ENCODE measurements at regions of chr15 and their contacts with region 1.

Region 1: DNA sequence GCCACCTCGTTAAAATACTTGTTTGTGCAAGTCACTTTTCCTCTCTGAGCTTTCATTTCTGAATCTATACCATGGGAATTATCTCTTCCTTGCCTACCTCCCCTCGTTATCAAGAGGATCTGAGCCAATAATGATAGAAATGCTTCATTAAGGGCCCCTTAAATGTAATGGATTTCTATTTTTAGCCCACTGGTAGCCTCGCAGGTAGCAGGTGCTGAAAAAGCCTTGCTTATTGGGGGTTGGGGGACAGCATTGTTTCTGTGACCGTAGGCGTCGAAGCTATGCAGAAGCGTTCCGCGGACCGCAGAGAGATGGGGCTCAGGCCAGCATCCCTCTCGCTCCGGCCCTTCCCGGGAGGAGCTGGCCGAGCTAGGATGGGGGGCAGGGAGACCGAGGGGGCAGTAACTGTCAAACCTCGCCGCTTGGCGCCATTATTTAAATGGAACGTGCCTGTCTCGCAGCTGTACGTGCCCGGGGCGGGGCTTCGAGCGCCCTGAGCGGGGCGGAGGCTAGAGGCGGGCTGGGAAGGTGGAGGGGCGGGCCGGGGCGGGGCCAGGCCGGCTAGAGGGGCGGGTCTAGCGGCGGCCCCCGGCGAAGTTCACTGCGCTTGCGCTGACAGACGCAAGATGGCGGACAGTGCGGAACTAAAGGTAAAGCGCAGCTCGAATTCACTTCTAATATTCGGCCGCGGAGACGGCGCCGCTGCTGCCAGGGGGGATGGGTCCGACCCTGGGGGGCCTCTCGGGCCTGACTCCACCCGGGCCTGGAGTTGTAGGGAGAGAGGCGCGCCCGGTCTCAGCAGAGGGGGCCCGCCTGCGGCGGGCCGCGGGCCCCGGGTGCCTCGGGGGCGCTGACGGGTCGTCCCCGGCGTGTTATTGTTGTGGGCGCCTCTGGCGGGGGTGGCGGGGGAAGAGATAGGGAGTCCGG is at the start of gene PIAS1:
- DNase-seq: peak; percentile 93 to 97
- ATAC-seq: peak; percentile 97 to 99 (median 98)
- H3K4me3 ChIP-seq: peak within 1 kb of the TSS; percentile 86 to 96 (median 92)
- H3K27ac ChIP-seq: peak within 1 kb of the TSS; percentile 60 to 96 (median 92)
- H3K4me1 ChIP-seq: peaks cover 0 to 42% (median 32%) of the 10 kb centered on the region in 9 donors
- H3K27me3 ChIP-seq: no peaks in the 10 kb centered on the region
- CTCF ChIP-seq: peak in 2 of 9 donors; percentile 14 to 21
- total RNA-seq, gene PIAS1: 23.5 to 37.9 (median 31.6) TPM

Region 2: DNA sequence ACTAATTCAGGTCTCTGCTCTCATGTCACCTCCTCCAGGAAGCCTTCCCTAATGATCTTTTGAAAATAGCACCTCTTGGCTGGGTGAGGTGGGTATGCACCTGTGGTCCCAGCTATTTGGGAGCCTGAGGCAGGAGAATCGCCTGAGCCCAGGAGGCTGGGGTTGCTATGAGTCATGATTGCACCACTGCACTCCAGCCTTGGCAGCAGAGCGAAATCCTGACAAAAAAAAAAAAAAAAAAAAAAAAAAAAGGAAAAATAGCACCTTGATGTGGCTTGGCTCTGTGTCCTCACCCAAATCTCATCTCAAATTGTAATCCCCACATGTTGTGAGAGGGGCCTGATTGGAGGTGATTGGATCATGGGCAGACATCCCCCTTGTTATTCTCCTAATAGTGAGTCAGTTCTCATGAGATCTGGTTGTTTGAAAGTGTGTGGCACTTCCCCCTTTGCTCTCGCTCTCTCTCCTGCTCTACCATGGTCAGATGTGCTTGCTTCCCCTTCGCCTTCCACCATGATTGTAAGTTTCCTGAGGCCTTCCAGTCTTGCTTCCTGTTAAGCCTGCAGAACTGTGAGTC is 202.9 kb before region 1 on chr15:
- intact Hi-C with region 1: no loop called
- DNase-seq: no peak
- ATAC-seq: peak in 1 of 8 donors; percentile 35
- H3K4me3 ChIP-seq: no peak overlapping the region
- H3K27ac ChIP-seq: no peak overlapping the region
- H3K4me1 ChIP-seq: peaks cover 0 to 7% (median 0%) of the 10 kb centered on the region in 9 donors
- H3K27me3 ChIP-seq: no peaks in the 10 kb centered on the region
- CTCF ChIP-seq: no peak

Region 3: DNA sequence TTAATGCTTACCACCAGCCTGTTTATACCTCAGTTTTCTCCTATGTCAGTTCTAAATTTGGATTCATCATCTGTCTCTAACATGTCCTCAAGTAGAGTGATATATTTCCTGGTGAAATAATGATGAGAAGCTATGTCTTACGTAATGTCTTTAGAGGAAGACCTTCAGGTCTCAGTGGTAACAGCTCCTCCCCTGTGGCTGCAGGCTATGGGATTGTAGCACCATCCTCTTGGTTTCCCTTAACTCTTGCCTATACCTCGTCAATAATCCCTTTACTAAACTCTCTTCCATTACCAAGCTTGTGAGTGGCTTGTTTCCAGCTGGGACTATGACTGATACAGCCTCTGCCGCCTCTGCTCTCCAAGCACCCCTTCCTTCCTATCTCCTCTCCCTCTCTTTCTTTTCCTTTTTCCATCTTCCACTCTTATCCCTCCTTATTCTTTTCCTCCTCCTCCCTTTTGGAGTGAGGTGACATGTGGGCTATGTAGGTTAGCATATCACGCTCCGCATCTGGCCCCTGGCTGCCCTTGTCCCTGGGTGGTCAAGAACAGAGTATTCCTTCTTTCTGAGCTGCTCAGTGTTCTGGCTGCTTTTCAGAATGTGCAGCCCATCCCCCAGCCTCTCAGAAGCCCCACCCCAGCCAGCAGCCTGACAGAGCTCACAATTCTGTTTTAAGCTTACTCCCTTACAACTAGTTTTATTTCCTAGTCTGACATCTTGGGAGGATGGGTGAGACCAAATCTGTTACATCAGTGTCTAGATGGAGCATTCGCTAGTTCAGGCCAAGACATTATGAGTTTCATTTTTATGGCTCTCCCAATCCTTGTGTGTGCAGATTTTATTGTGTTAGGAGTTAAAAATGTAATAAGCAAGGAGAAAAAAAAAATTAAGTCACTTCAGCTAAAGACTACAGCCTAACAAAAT is 139.2 kb before region 1 on chr15:
- intact Hi-C with region 1: loop called in 1 of 10 experiments (anchors 5 kb)
- DNase-seq: peak; percentile 47 to 60
- ATAC-seq: peak; percentile 25 to 86 (median 75)
- H3K4me3 ChIP-seq: no peak overlapping the region
- H3K27ac ChIP-seq: peak overlapping the region; percentile 15 to 91 (median 78)
- H3K4me1 ChIP-seq: peaks cover 4 to 45% (median 32%) of the 10 kb centered on the region in 9 donors
- H3K27me3 ChIP-seq: no peaks in the 10 kb centered on the region
- CTCF ChIP-seq: no peak

Region 4: DNA sequence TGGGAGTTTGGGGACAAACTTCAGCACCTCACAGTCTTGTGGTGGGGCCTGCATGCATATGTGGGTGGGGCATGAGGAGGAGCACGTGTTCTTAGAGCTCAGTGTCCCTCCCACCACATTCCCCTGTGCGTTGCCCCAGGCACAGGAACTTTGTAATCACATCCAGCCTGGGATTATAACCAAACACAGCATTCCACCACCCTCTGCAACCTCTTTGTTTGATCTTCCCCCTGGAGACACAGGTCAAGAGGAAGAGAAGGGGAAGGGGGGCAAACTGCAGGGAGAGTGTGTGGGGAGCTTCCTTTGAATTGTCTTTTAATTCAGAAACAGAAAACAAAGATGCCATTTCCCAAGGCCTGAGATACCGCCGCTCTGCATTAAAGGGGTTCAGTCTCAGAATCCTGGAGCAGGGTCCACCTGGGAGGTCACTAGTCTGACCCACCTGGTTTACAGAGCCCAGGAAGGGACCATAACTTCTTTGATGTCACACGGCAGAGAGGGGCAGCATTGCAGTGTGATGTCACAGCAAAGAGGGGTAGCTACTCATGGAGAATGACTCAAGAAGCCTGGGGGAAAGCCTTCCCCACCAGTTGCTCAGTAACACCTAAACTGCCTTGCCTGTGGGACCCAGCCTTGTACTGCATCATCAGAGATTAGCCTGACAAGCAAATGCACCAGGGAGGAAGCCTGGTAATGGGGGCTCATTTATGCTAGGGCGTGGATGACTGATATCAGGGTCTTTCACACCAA is 107.8 kb before region 1 on chr15:
- intact Hi-C with region 1: no loop called
- DNase-seq: peak in 1 of 2 donors; percentile 22
- ATAC-seq: peak in 7 of 8 donors; percentile 13 to 84 (median 66)
- H3K4me3 ChIP-seq: peak overlapping the region in 1 of 10 donors; percentile 9
- H3K27ac ChIP-seq: peak overlapping the region; percentile 6 to 82 (median 62)
- H3K4me1 ChIP-seq: peaks cover 11 to 50% (median 25%) of the 10 kb centered on the region in 9 donors
- H3K27me3 ChIP-seq: no peaks in the 10 kb centered on the region
- CTCF ChIP-seq: no peak

Region 5: GRCh38 chr15:67992834-67993233 is 61.1 kb before region 1 on chr15:
- intact Hi-C with region 1: no loop called
- DNase-seq: no peak
- ATAC-seq: no peak
- H3K4me3 ChIP-seq: no peak overlapping the region
- H3K27ac ChIP-seq: no peak overlapping the region
- H3K4me1 ChIP-seq: no peaks in the 10 kb centered on the region
- H3K27me3 ChIP-seq: no peaks in the 10 kb centered on the region
- CTCF ChIP-seq: no peak

Region 6: GRCh38 chr15:68010361-68011153 is 43.4 kb before region 1 on chr15:
- intact Hi-C with region 1: no loop called
- DNase-seq: no peak
- ATAC-seq: no peak
- H3K4me3 ChIP-seq: no peak overlapping the region
- H3K27ac ChIP-seq: no peak overlapping the region
- H3K4me1 ChIP-seq: peaks cover 0 to 14% (median 0%) of the 10 kb centered on the region in 9 donors
- H3K27me3 ChIP-seq: no peaks in the 10 kb centered on the region
- CTCF ChIP-seq: no peak

Region 7: GRCh38 chr15:68097029-68097428 is 43.1 kb after region 1 on chr15:
- intact Hi-C with region 1: loop called in 1 of 10 experiments (anchors 5 kb)
- DNase-seq: no peak
- ATAC-seq: no peak
- H3K4me3 ChIP-seq: no peak overlapping the region
- H3K27ac ChIP-seq: no peak overlapping the region
- H3K4me1 ChIP-seq: peaks cover 0 to 39% (median 19%) of the 10 kb centered on the region in 9 donors
- H3K27me3 ChIP-seq: no peaks in the 10 kb centered on the region
- CTCF ChIP-seq: no peak

Region 8: GRCh38 chr15:68114356-68114755 is 60.4 kb after region 1 on chr15:
- intact Hi-C with region 1: loop called in 1 of 10 experiments (anchors 10 kb)
- DNase-seq: no peak
- ATAC-seq: peak in 6 of 8 donors; percentile 29 to 77 (median 58)
- H3K4me3 ChIP-seq: peak overlapping the region in 9 of 10 donors; percentile 6 to 52 (median 39)
- H3K27ac ChIP-seq: peak overlapping the region in 9 of 10 donors; percentile 3 to 79 (median 51)
- H3K4me1 ChIP-seq: peaks cover 0 to 47% (median 37%) of the 10 kb centered on the region in 9 donors
- H3K27me3 ChIP-seq: no peaks in the 10 kb centered on the region
- CTCF ChIP-seq: no peak

Region 9: DNA sequence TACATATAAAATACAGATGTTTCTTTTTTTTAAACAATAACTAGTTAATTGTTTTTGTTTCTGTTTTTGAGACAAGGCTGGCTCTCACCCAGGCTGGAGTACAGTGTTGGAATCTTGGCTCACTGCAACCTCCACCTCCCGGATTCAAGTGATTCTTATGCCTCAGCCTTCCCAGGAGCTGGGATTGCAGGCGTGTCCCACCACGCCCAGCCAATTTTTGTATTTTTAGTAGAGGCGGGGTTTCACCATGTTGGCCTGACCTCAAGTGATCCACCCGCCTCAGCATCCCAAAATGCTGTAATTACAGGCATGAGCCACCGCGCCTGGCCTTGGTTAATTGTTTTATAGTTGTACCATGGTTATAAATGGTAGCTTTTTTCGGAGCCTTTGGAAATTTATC is 72.4 kb after region 1 on chr15:
- intact Hi-C with region 1: loop called in 1 of 10 experiments (anchors 5 kb)
- DNase-seq: peak; percentile 32 to 64
- ATAC-seq: peak; percentile 55 to 90 (median 81)
- H3K4me3 ChIP-seq: no peak overlapping the region
- H3K27ac ChIP-seq: peak overlapping the region in 5 of 10 donors; percentile 3 to 51 (median 34)
- H3K4me1 ChIP-seq: peaks cover 0 to 66% (median 18%) of the 10 kb centered on the region in 9 donors
- H3K27me3 ChIP-seq: no peaks in the 10 kb centered on the region
- CTCF ChIP-seq: no peak

Region 10: GRCh38 chr15:68154923-68155559 is 101.1 kb after region 1 on chr15:
- intact Hi-C with region 1: loop called in 9 of 10 experiments (anchors 2 to 10 kb)
- DNase-seq: peak in 1 of 2 donors; percentile 59
- ATAC-seq: peak in 7 of 8 donors; percentile 45 to 75 (median 57)
- H3K4me3 ChIP-seq: no peak overlapping the region
- H3K27ac ChIP-seq: no peak overlapping the region
- H3K4me1 ChIP-seq: peaks cover 0 to 18% (median 0%) of the 10 kb centered on the region in 9 donors
- H3K27me3 ChIP-seq: no peaks in the 10 kb centered on the region
- CTCF ChIP-seq: peak; percentile 59 to 89 (median 72)

Measured in heart right ventricle (tissue), 16 donors.